Posterior vena cava (tissue), 2 donors: ENCODE measurements at regions of chr17 and their contacts with region 1.

Region 1: GRCh38 chr17:51378059-51378458 is 117.7 kb downstream of the UTP18 start:
- DNase-seq: no peak

Region 2: DNA sequence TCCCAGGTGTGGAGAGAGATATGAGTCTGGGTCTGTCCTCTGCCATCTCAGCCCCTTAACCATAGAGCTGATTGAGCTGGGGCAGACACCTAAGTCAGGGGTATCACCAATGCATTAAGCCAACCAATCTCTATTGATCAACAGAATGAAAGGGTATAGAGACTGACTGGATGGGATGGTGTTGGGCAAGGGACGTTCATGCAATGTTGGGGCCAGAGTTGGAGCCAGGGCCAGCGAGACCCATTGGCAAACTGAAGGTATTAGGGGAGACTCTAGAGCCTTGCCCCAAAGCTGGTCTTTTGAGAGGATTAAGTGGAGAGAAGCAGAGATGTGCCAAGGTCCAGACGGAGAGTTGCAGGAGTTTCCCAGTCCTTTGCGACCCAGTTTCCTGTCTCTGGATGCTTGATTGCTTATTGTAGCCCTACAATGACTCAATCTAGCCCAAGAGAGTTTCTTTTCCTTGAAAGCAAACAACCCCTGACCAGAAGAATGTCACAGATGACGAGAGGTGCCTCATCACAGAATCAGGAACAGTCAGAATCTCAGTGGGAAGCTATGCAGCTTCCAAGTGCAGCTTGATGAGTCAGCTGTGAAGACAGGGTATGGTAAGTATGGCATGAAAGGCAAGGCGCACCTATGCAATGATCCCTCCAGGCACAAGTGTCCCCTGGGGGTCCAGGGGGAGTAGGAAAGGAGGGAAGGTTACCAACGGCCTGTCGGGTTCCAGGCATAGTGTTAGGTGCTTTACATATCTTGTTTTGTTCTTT is 19.5 kb after region 1 on chr17:
- intact Hi-C with region 1: loop called in 1 of 2 experiments (anchors 1 kb)
- DNase-seq: no peak

Region 3: GRCh38 chr17:51540151-51540550 is 162.1 kb after region 1 on chr17:
- intact Hi-C with region 1: no loop called
- DNase-seq: no peak